ENCODE measurements at regions of chr2 and their contacts with region 1.

Region 1: GRCh38 chr2:39429746-39430145 is 7.3 kb downstream of the MAP4K3 start:
- DNase-seq: no peak
- H3K4me3 ChIP-seq: no peak overlapping the region
- H3K27ac ChIP-seq: no peak overlapping the region
- H3K4me1 ChIP-seq: no peaks in the 10 kb centered on the region
- H3K27me3 ChIP-seq: no peaks in the 10 kb centered on the region
- CTCF ChIP-seq: no peak

Region 2: DNA sequence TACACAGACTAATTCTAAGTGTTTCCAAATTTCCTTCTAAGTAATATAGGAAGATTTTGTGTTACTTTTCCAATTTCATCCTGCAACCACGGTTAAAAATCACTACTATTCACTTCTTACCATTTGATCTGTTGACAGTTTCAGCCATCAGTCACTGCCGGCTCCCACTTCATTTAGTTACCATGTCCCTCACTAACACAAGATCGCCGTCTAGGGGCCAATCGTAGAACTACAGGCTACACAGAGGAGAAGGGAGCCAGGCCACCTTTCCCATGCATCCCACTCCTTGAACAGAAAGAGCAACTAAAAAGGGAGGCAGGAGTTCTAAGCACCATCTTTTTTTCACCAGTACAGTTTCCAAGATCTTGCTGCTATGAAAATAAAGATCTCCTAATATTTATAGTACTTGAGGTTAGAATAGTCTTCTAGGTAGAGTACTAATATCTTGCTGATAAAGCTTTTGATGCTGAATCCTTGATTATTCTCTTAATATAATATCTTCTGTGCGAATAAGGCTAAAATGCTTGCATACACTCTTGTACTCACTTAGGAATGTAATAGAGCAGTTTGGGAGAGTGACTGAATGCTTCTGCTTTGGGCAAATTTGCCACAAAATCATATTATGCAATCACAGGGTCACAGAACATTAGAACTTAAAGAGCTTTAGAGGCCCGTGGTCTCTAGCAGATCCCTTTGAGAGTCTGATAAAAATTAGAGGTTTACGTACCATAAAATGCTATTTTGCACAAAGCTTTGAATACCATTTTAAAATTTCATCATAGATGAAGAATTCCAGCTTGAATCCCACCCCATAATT is 1314.3 kb before region 1 on chr2:
- intact Hi-C with region 1: no loop called
- DNase-seq: peak; percentile 90
- H3K4me3 ChIP-seq: no peak overlapping the region
- H3K27ac ChIP-seq: no peak overlapping the region
- H3K4me1 ChIP-seq: no peaks in the 10 kb centered on the region
- H3K27me3 ChIP-seq: no peaks in the 10 kb centered on the region
- CTCF ChIP-seq: peak; percentile 90

Region 3: GRCh38 chr2:39017334-39017733 is 412.4 kb before region 1 on chr2:
- intact Hi-C with region 1: no loop called
- DNase-seq: no peak
- H3K4me3 ChIP-seq: no peak overlapping the region
- H3K27ac ChIP-seq: no peak overlapping the region
- H3K4me1 ChIP-seq: no peaks in the 10 kb centered on the region
- H3K27me3 ChIP-seq: no peaks in the 10 kb centered on the region
- CTCF ChIP-seq: no peak

Region 4: GRCh38 chr2:39411181-39411944 is 18.4 kb before region 1 on chr2:
- intact Hi-C with region 1: loop called (anchors 2 kb)
- DNase-seq: no peak
- H3K4me3 ChIP-seq: no peak overlapping the region
- H3K27ac ChIP-seq: no peak overlapping the region
- H3K4me1 ChIP-seq: peaks cover 8% of the 10 kb centered on the region
- H3K27me3 ChIP-seq: no peaks in the 10 kb centered on the region
- CTCF ChIP-seq: no peak

Region 5: GRCh38 chr2:39728941-39729351 is 299.2 kb after region 1 on chr2:
- intact Hi-C with region 1: no loop called
- DNase-seq: no peak
- H3K4me3 ChIP-seq: no peak overlapping the region
- H3K27ac ChIP-seq: no peak overlapping the region
- H3K4me1 ChIP-seq: no peaks in the 10 kb centered on the region
- H3K27me3 ChIP-seq: no peaks in the 10 kb centered on the region
- CTCF ChIP-seq: peak; percentile 59